Activated CD4-positive, alpha-beta memory T cell treated with anti-CD3 and anti-CD28 coated beads for 36 hours (primary cell): ENCODE measurements at regions of chr13 and their contacts with region 1.

Region 1: DNA sequence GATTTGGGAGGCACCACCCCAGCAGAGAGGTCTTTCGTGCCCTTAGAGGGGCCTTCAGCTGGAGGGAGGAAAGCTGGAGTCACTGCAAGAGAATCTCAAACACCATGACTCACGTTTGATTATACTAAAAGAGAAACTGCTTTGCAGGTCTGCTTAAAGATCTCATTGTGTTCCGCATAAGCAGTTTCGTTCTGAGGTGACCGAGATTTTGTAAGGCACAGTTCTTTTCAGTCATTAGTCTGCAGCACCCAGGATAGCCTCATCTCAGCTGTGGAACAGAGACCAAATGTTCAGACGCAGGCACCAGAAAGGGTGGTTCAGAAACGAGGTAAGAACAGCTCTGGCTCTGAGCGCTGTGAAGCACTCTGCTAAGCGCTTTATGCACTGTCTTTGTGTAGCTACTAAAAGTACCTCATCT is 71.2 kb upstream of the GTF3A start:
- DNase-seq: peak; percentile 79
- H3K4me3 Mint-ChIP-seq: peak overlapping the region; percentile 45
- H3K27ac Mint-ChIP-seq: peak overlapping the region; percentile 82
- H3K4me1 Mint-ChIP-seq: peaks cover 19% of the 10 kb centered on the region
- H3K27me3 Mint-ChIP-seq: peaks cover 12% of the 10 kb centered on the region

Region 2: GRCh38 chr13:26971990-26972887 is 380.9 kb before region 1 on chr13:
- CTCF ChIA-PET with region 1: interaction called, 10 read pairs
- POLR2A ChIA-PET with region 1: no interaction called
- intact Hi-C with region 1: no loop called
- DNase-seq: peak; percentile 59
- H3K4me3 Mint-ChIP-seq: no peak overlapping the region
- H3K27ac Mint-ChIP-seq: no peak overlapping the region
- H3K4me1 Mint-ChIP-seq: peaks cover 5% of the 10 kb centered on the region
- H3K27me3 Mint-ChIP-seq: no peaks in the 10 kb centered on the region

Region 3: GRCh38 chr13:27270594-27271520 is 82.3 kb before region 1 on chr13 and contains the start of gene RASL11A:
- CTCF ChIA-PET with region 1: interaction called, 4 read pairs
- POLR2A ChIA-PET with region 1: no interaction called
- intact Hi-C with region 1: loop called (anchors 5 kb)
- DNase-seq: peak; percentile 73
- H3K4me3 Mint-ChIP-seq: peak within 1 kb of the TSS; percentile 82
- H3K27ac Mint-ChIP-seq: no peak within 1 kb of the TSS
- H3K4me1 Mint-ChIP-seq: peaks cover 11% of the 10 kb centered on the region
- H3K27me3 Mint-ChIP-seq: peaks cover 15% of the 10 kb centered on the region
- total RNA-seq, gene RASL11A: 4.8 to 6.8 TPM

Region 4: GRCh38 chr13:27293873-27294515 is 59.2 kb before region 1 on chr13:
- CTCF ChIA-PET with region 1: no interaction called
- POLR2A ChIA-PET with region 1: no interaction called
- intact Hi-C with region 1: loop called (anchors 2 kb)
- DNase-seq: peak; percentile 25
- H3K4me3 Mint-ChIP-seq: no peak overlapping the region
- H3K27ac Mint-ChIP-seq: peak overlapping the region; percentile 24
- H3K4me1 Mint-ChIP-seq: peaks cover 24% of the 10 kb centered on the region
- H3K27me3 Mint-ChIP-seq: no peaks in the 10 kb centered on the region

Region 5: DNA sequence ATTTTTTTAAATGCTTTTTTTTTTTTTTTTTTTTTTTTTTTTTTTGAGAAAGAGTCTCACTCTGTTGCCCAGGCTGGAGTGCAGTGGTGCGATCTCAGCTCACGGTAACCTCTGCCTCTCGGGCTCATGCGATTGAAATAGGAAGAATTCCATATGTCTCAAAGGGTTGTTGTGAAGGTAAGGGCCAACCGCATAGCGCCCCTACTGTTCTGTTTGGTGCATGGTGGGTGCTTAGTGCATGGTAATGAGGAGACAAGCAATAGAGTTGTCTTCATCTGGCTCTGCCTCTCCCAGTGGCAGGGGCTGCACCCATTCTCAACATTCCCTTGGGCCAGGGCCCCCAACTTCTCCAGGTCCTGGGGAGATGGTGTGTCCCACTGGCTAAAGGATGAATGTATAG is 13.9 kb before region 1 on chr13:
- CTCF ChIA-PET with region 1: interaction called, 19 read pairs
- POLR2A ChIA-PET with region 1: no interaction called
- intact Hi-C with region 1: loop called (anchors 2 kb)
- DNase-seq: peak; percentile 58
- H3K4me3 Mint-ChIP-seq: no peak overlapping the region
- H3K27ac Mint-ChIP-seq: no peak overlapping the region
- H3K4me1 Mint-ChIP-seq: no peaks in the 10 kb centered on the region
- H3K27me3 Mint-ChIP-seq: peaks cover 8% of the 10 kb centered on the region

Region 6: GRCh38 chr13:27644302-27644701 is 291.1 kb after region 1 on chr13:
- CTCF ChIA-PET with region 1: no interaction called
- POLR2A ChIA-PET with region 1: no interaction called
- intact Hi-C with region 1: no loop called
- DNase-seq: no peak
- H3K4me3 Mint-ChIP-seq: no peak overlapping the region
- H3K27ac Mint-ChIP-seq: peak overlapping the region; percentile 16
- H3K4me1 Mint-ChIP-seq: peaks cover 27% of the 10 kb centered on the region
- H3K27me3 Mint-ChIP-seq: no peaks in the 10 kb centered on the region